ENCODE measurements at regions of chr1 and their contacts with region 1.

Region 1: DNA sequence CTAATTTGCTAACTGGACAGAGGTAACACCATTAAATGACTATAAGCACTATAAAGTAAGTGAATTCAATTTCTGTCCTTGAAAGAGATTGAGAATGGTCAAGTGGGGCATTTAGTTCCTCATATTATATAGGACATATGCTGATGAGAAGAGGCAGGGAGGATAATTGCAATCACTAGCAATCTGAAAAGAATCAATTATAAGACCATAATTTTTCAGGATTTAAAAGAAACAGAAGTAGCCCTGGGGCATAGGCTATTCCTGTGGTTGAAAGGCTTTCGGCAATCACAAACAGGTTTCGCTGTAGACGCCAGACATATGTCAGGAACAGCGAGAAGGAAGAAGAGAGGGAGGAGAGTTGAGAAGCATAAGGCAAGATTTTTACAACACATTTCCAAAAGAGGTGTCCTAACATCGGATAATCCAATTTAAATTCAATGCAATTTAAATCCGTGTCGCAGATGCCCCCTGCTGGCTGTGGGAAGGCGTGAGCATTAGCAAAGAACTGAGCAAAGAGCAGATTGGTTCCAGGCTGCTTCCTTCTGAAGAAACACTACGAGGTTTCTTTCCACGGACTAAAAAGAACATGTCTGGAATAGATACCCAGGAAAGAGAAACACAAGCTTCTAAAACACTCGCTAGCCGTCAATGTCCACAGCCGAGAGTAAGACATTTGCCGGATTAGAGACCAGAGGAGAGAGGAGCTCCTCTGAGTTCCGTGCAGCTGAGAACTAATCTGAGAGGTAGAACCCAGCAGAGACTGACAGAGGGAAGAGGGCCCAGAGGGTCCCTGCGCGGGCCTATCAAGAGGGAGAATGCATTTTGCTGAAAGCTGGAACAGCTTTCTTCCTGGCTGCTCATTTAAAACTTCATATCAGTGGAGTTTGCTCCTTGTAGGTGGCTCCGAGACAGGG is 27.9 kb downstream of the RGS5 start:
- DNase-seq: peak; percentile 80
- ATAC-seq: peak; percentile 81

Region 2: DNA sequence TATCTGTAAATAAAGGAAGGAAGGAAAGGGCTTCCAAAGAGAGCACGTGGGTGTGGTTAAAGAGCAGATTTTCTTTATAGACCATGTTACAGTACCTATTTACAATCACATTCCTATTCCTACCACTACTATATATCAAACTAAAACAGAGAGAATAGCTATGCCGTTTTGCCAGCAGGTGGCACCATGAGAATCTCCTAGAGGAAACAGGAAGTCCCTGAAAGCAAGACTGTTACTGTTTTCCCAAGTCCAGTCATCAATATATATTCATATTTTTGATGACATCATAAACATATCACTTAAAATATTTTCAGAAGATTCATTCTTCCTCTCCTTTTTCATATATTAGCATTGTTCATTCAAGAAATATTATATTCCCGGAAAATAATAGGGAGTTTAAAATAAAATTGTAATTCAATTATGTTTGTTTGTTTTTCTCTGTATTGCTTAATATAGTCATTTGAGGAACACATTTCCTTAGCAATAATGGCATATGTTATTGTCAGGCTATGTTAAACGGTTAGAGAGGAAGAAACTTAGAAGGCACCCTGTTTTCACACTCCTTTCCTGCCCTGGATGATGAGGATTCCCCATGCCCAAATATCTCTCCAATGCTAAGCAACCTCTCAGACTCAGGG is 320.4 kb before region 1 on chr1:
- intact Hi-C with region 1: loop called (anchors 5 kb)
- DNase-seq: peak; percentile 45
- ATAC-seq: peak; percentile 38

Region 3: DNA sequence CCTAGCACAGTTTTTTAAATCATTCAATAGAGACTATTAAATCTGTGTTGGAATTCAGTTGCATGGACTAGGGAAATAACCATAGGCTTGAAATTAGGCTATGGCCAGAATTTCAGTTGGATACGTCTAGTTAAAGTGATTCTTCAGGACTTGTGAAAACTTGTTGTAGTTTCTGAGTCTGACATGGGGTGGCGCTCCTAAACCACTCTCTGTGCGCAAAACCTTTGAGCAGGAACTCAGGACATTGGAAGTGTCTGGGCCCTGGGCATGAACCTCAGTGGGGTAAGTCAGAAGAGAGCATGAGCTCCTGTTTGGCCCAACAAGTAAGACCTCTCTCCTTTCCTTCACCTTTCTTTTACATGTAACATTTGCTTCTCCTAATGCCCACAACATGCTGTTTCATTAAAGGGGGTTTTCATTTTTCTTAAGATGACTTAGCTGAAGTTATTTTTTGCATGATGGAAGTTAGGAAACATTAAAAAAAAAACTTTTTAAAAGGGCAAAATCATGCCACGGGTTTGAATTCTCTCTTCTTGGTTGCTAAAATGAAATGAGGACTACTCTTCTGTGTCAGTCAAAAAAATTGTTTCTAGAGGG is 296.7 kb before region 1 on chr1:
- intact Hi-C with region 1: loop called (anchors 5 kb)
- DNase-seq: no peak
- ATAC-seq: peak; percentile 70

Region 4: DNA sequence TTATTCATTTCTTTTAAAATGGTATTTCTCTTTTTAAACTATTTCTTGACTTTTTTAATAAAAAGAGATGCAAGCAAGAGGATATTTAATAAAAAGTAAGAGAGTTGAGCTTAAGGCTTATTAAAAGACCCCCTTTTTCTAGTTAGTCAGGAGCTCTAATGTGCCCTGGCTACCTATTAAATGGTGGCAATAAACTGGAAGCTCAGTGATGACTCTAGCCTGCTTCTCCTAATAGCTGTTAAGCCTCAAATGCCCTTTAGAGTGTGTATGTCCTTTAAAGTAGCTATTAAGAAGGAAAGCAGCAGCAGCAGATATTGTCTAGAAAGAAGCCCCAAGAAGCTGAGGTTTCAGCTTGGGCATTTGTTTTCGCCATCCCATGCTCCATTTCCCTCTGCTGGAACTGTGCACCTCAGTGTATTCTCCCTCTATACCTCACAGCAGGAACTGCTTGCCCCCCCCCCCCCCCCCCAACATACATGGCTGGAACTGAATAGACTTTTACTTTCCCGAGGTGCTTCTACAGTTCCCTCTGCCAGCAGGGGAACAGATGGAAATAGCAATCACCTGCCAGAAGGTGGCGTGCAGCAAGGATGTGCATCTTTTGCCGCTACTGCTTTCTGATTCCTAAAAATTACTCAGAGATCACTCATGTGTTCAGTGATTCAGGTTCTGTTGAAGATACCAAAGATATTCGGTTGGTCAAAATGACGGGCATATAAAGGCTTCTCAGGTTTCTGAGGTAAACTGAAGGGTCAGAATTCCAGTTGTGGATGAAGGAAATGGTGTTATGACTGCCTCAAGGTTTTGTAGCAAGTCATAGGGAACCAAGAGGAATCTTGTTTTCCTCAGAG is 103.2 kb before region 1 on chr1:
- intact Hi-C with region 1: loop called (anchors 5 kb)
- DNase-seq: peak; percentile 68
- ATAC-seq: peak; percentile 61

Region 5: DNA sequence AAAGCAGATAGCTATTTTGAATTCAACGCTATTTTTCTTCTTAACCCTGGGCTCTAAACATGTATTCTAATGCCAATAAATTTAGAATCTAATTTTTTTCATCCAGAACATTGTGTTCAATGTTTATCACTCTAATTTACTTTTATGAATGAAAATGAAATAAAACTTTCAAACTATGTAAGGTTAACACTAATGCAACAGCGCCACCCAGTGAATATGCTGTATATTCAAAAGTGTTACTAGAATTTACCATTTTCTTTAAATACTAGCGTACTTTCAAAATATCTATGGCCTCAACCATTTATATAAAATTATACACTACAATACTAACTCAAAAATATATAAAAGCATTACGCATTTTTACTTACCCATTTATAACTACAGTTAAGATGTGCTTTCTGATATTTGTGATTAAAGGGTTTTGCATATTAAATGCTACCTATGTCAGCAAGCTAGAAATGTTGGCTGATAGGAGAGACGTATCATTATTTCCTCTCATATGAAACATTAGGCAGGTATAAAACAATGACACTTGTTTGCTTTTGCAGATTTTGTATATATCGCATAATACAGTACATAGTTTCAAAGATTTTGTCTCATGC is 141.1 kb after region 1 on chr1:
- intact Hi-C with region 1: loop called (anchors 10 kb)
- DNase-seq: no peak
- ATAC-seq: no peak